Right ventricle myocardium inferior (tissue), 1 donor: ENCODE measurements at regions of chr6 and their contacts with region 1.

Region 1: GRCh38 chr6:27161946-27162603 is 85.4 kb upstream of the PRSS16 start:
- DNase-seq: no peak
- ATAC-seq: no peak

Region 2: GRCh38 chr6:27119761-27120160 is 42.3 kb before region 1 on chr6:
- intact Hi-C with region 1: loop called (anchors 5 kb)
- DNase-seq: no peak
- ATAC-seq: no peak